Posterior cingulate gyrus (tissue), 11 donors: ENCODE measurements at regions of chr16 and their contacts with region 1.

Region 1: GRCh38 chr16:25656639-25657038 is 35.1 kb upstream of the HS3ST4 start:
- DNase-seq: no peak

Region 2: DNA sequence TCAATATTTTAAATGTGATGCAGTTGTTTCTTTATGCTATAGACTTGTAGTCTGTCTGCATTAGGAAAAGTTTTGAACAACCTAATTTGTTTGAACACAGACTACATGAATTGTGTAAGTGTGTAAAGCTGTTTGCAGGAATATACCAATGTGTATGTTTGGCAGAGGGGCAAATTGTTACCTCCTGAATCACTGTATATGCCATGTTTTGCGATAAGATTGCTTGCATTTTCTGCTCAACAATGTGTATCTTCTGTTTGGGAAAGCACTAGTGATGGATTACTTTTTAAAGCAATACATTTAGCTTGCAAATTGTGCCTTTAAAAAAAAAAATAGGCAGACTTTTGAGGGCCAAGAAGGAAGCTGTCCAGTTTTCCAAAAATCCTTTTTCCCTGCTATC is 1102.7 kb before region 1 on chr16:
- intact Hi-C with region 1: no loop called
- DNase-seq: no peak

Region 3: GRCh38 chr16:25481646-25482045 is 175.0 kb before region 1 on chr16:
- intact Hi-C with region 1: no loop called
- DNase-seq: no peak

Region 4: DNA sequence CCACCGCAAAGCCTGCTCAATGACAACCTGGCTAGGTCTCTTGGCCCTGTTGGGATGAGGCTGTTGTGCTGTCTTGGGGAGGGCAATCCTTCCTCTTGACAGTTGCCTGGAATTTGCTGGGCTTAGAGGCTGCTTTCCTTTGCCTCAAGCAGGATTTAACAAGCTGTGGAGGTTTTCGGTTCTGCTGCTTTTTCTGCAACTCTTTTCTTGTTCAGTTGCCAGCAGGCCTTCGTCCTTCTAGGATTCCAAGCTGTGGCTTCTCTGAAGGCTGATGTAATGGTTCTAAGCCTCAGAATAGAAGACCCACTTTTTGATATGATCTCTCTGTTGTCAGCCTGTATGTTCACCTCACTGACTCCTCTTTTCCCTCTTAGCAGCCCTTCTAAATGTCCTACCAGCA is 114.3 kb before region 1 on chr16:
- intact Hi-C with region 1: no loop called
- DNase-seq: peak in 1 of 10 donors; percentile 3

Region 5: DNA sequence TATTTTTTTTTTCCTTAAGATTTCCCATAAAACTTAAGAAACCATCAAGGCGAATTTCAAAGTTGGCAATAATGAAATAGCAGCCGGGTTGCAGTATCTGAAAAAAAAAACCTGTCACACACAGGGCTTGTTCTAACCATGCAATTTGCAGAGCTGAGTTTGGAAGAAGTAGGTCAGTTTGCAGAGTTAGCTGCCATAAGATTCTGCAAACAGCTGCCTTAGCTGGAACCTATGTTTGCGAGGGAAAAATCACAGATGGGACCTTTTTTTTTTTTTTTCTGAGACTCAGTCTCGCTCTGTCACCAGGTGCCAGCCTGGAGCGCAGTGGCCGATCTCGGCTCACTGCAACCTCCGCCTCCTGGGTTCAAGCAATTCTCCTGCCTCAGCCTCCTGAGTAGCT is 63.4 kb before region 1 on chr16:
- intact Hi-C with region 1: loop called (anchors 10 kb)
- DNase-seq: peak in 1 of 10 donors; percentile 7